Breast epithelium (tissue), 4 donors: ENCODE measurements at regions of chr1 and their contacts with region 1.

Region 1: GRCh38 chr1:102500758-102501157 is 504.0 kb upstream of the OLFM3 start:
- DNase-seq: no peak
- H3K4me3 ChIP-seq: no peak overlapping the region
- H3K27ac ChIP-seq: no peak overlapping the region
- H3K4me1 ChIP-seq: no peaks in the 10 kb centered on the region
- H3K27me3 ChIP-seq: no peaks in the 10 kb centered on the region
- CTCF ChIP-seq: no peak
- POLR2A ChIP-seq: no peak

Region 2: GRCh38 chr1:102531036-102531435 is 30.3 kb after region 1 on chr1:
- intact Hi-C with region 1: no loop called
- DNase-seq: no peak
- H3K4me3 ChIP-seq: no peak overlapping the region
- H3K27ac ChIP-seq: no peak overlapping the region
- H3K4me1 ChIP-seq: no peaks in the 10 kb centered on the region
- H3K27me3 ChIP-seq: no peaks in the 10 kb centered on the region
- CTCF ChIP-seq: no peak
- POLR2A ChIP-seq: no peak

Region 3: GRCh38 chr1:102884238-102884637 is 383.5 kb after region 1 on chr1:
- intact Hi-C with region 1: loop called (anchors 10 kb)
- DNase-seq: no peak
- H3K4me3 ChIP-seq: no peak overlapping the region
- H3K27ac ChIP-seq: no peak overlapping the region
- H3K4me1 ChIP-seq: no peaks in the 10 kb centered on the region
- H3K27me3 ChIP-seq: no peaks in the 10 kb centered on the region
- CTCF ChIP-seq: no peak
- POLR2A ChIP-seq: no peak